ENCODE measurements at regions of chr9 and their contacts with region 1.

Region 1: DNA sequence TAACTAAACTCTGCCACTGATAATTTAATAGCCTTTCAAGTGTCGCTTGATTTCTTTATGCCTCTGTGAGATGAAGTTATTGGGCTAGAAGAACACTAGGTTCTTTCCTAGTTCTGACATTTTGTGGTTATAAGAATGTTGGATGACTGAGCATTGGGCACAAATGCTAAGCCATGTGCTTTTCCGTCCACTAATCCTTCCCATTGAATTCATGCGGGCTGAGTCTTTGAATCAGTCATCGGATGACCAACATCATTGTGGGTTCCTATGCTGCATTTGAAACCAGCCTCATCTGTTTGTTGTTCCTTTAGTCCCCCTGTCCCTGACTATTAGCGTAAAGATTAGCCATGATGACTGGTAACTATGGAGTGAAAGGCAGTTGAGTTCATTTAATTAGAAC is 58.5 kb downstream of the ALDH1A1 start:
- DNase-seq: peak; percentile 4
- ATAC-seq: no peak
- H3K4me3 ChIP-seq: no peak overlapping the region
- H3K27ac ChIP-seq: no peak overlapping the region
- H3K4me1 ChIP-seq: no peaks in the 10 kb centered on the region
- H3K27me3 ChIP-seq: no peaks in the 10 kb centered on the region
- CTCF ChIP-seq: no peak
- POLR2A ChIP-seq: no peak
- RAD21 ChIP-seq: no peak

Region 2: DNA sequence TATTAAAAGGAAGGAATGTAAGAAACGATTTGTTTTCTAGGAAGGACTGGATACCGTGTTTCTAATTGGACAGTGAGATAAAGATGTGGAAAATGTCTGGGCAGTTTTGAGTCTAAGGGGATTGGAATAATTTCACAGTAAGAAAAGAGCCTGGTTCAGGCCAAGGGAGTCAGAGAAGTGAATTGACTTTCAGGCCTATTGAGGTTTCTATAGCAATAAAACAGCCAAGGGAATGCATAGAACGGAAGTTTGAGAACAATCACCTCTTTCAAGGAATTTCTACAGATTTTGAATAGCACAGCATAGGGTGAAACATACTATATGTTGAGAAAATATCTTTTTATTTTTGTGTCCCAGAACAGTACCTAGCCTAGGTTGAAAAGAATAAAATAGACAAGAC is 1501.3 kb before region 1 on chr9:
- CTCF ChIA-PET with region 1: no interaction called
- POLR2A ChIA-PET with region 1: no interaction called
- dilution Hi-C with region 1: no loop called
- in situ Hi-C with region 1: no loop called
- intact Hi-C with region 1: no loop called
- DNase-seq: no peak
- ATAC-seq: no peak
- H3K4me3 ChIP-seq: no peak overlapping the region
- H3K27ac ChIP-seq: no peak overlapping the region
- H3K4me1 ChIP-seq: no peaks in the 10 kb centered on the region
- H3K27me3 ChIP-seq: no peaks in the 10 kb centered on the region
- CTCF ChIP-seq: no peak
- POLR2A ChIP-seq: no peak
- RAD21 ChIP-seq: no peak

Region 3: DNA sequence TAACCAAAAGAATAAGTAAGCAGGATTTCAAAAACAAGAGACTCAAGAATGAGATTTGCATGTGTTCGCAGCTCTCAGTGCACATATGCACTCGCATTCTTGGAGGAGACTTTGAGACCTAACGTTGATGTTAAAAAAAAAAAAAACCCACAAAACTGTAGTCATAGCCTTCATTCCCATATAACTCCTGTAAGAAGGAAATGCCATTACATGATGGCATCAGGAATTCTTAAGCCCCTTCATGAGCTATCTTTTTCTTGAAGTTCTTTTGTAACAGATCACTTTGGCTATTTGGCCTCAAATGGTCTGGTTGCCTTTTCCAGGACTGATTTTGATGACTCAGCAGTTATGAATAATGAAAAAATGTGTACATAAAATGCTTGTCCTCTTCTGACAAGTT is 55.3 kb before region 1 on chr9:
- CTCF ChIA-PET with region 1: no interaction called
- POLR2A ChIA-PET with region 1: no interaction called
- dilution Hi-C with region 1: no loop called
- in situ Hi-C with region 1: loop called (anchors 10 kb)
- intact Hi-C with region 1: no loop called
- DNase-seq: no peak
- ATAC-seq: no peak
- H3K4me3 ChIP-seq: no peak overlapping the region
- H3K27ac ChIP-seq: no peak overlapping the region
- H3K4me1 ChIP-seq: no peaks in the 10 kb centered on the region
- H3K27me3 ChIP-seq: no peaks in the 10 kb centered on the region
- CTCF ChIP-seq: no peak
- POLR2A ChIP-seq: no peak
- RAD21 ChIP-seq: no peak

Region 4: DNA sequence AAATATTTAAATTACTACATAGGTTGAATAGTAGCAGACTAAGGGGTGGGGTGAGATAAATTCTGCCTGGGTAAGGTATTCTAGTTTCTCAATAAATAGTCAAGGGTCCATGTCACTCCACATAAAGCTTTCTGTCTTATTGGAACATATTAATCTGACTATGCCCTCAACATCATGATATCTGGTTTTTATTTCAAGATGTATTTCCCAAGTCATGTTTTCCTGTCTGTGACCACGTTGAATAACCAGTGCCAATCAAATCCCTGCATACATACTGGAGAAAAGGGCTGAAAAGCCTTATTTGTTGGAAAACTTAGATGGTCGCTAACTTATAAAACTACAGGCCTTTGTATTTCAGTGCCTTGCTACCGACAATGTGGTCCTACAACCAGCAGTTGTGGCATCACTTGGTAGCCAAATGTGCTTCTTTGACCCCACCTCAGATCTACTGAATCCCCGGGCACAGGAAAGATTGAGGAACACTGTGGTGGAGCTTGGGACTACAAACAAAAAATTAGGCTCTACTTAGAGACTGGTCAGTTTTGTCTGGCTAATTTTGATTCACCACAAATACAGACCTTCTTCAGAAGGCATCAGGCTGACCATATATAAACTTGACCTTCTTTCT is 19.2 kb after region 1 on chr9:
- CTCF ChIA-PET with region 1: no interaction called
- POLR2A ChIA-PET with region 1: interaction called, 3 read pairs
- dilution Hi-C with region 1: no loop called
- in situ Hi-C with region 1: no loop called
- intact Hi-C with region 1: loop called (anchors 2 kb)
- DNase-seq: no peak
- ATAC-seq: no peak
- H3K4me3 ChIP-seq: no peak overlapping the region
- H3K27ac ChIP-seq: no peak overlapping the region
- H3K4me1 ChIP-seq: no peaks in the 10 kb centered on the region
- H3K27me3 ChIP-seq: no peaks in the 10 kb centered on the region; the same call in 1 of the 2 replicates
- CTCF ChIP-seq: no peak
- POLR2A ChIP-seq: no peak
- RAD21 ChIP-seq: no peak